ENCODE measurements at regions of chr13 and their contacts with region 1.

Region 1: DNA sequence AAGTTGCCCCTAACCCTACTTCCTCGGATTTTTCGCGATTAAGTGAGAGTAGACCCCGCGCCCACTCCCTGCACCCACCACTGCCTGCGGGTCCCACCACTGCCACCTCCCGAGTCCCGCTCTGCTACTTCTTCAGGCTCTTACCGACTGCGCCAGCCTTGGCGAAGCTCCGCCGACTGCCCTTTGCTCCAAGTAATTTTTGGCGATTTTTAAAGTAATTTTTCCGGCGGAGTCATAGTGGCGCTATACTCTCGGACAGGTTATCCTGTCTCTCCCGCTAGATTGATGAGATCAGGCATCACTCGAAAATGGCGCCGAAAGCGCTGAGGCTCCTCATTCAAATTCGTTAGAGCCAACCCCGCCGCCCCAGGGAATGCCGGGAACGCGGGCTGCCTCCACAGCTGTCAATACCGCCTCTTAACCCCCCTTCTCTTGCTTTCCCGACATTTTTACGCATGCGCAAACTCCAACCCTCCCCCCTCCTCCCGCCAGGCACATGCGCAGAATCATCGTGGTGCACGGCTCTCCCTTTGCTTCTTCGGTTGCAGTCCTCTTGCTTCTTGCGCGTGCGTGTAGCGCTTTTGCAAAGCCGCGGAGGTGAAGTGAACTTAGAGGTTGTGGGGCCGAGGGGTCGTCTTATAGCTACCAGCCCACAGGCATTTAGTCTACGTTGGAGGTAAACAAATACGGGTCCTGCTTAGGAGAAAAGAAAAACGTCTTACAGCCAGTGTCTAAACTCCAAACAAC is 66.6 kb downstream of the KCNRG start:
- DNase-seq: peak; percentile 75 to 97
- ATAC-seq: peak; percentile 83 to 89
- H3K4me3 ChIP-seq: peak overlapping the region; percentile 80
- H3K27ac ChIP-seq: peak overlapping the region; percentile 91 to 98
- H3K4me1 ChIP-seq: peaks cover 19% of the 10 kb centered on the region; the same call in 2 of the 3 replicates
- CTCF ChIP-seq: no peak; the same call in 2 of the 3 replicates
- EP300 ChIP-seq: no peak
- POLR2A ChIP-seq: peak; percentile 26
- RAD21 ChIP-seq: no peak

Region 2: DNA sequence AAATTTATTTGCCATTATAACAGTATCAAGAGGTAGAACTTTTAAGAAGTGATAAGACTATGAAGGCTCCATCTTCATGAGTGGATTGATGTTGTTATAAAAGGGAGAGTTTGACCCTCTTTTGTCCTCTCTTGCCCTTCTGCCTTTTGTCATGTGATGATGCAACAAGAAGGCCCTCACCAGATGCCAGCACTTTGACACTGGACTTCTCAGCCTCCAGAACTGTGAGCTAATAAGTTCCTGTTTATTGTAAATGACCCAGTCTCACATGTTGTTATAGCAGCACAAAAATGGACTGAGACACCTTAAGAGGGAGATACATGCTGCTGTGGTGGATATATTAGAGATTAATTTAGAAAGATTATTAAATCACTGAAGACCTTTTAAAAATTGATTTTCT is 217.3 kb before region 1 on chr13:
- CTCF ChIA-PET with region 1: no interaction called
- POLR2A ChIA-PET with region 1: no interaction called
- DNase-seq: no peak
- ATAC-seq: no peak
- H3K4me3 ChIP-seq: no peak overlapping the region
- H3K27ac ChIP-seq: peak overlapping the region; percentile 44 to 52; a peak in 2 of 6 replicates
- H3K4me1 ChIP-seq: peaks cover 14% of the 10 kb centered on the region
- CTCF ChIP-seq: no peak
- EP300 ChIP-seq: no peak
- POLR2A ChIP-seq: no peak
- RAD21 ChIP-seq: no peak

Region 3: GRCh38 chr13:49996951-49997895 is 84.6 kb before region 1 on chr13 and contains the start of gene TRIM13:
- CTCF ChIA-PET with region 1: interaction called, 22 read pairs
- POLR2A ChIA-PET with region 1: interaction called, 36 read pairs
- DNase-seq: peak; percentile 49 to 87
- ATAC-seq: peak; percentile 91 to 92
- H3K4me3 ChIP-seq: peak within 1 kb of the TSS; percentile 76
- H3K27ac ChIP-seq: peak within 1 kb of the TSS; percentile 99 to 100
- H3K4me1 ChIP-seq: peaks cover 24% of the 10 kb centered on the region
- CTCF ChIP-seq: peak; percentile 65
- EP300 ChIP-seq: no peak; a peak in 1 of 5 replicates
- POLR2A ChIP-seq: no peak; the same call in 1 of the 2 replicates
- RAD21 ChIP-seq: peak; percentile 41 to 49; a peak in 2 of 5 replicates
- polyA plus RNA-seq, gene TRIM13: 22.4 and 23.0 TPM in 2 replicates

Region 4: GRCh38 chr13:50071379-50071778 is 10.5 kb before region 1 on chr13:
- CTCF ChIA-PET with region 1: interaction called, 4 read pairs
- POLR2A ChIA-PET with region 1: interaction called, 10 read pairs
- DNase-seq: no peak
- ATAC-seq: no peak
- H3K4me3 ChIP-seq: no peak overlapping the region
- H3K27ac ChIP-seq: peak overlapping the region; percentile 25 to 31; a peak in 3 of 6 replicates
- H3K4me1 ChIP-seq: peaks cover 79% of the 10 kb centered on the region
- CTCF ChIP-seq: no peak
- EP300 ChIP-seq: no peak
- POLR2A ChIP-seq: no peak
- RAD21 ChIP-seq: no peak

Region 5: GRCh38 chr13:50116430-50116973 is 34.6 kb after region 1 on chr13:
- CTCF ChIA-PET with region 1: interaction called, 11 read pairs
- POLR2A ChIA-PET with region 1: no interaction called
- DNase-seq: no peak
- ATAC-seq: no peak
- H3K4me3 ChIP-seq: no peak overlapping the region
- H3K27ac ChIP-seq: no peak overlapping the region
- H3K4me1 ChIP-seq: peaks cover 4% of the 10 kb centered on the region; the same call in 1 of the 3 replicates
- CTCF ChIP-seq: no peak
- EP300 ChIP-seq: no peak
- POLR2A ChIP-seq: no peak
- RAD21 ChIP-seq: no peak

Region 6: DNA sequence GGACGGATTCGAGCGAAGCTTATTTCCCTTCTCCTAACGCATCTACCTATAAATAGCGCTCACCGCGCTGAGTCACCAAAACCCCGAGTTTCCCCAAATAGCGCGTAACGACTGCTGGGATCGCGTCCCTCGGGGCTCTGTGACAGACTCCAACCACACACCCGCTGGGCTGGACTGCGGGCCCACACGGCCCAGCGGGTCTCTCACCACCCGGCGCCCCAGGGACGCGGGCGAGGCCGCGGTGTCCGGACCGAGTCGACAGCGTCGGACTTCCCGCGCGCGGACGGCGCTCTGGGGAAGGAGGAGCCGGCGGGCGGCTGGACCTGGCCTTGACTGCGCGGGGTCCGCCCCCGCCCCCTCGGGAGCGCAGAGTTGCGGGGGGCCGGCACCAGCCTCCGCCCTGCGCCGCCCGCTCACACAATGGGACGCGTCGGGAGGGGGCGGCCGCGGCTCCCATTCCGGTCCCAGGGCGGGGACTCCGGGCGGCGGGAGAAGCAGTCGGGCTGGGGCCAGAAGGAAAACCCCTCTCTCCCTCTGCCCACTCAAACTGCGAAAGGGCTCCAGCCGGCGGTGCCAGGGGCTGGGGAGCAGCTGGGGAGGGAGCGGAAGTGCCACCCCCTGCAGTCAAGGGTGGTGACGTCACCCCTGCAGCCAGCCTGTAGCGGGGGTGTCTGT is 42.1 kb after region 1 on chr13:
- CTCF ChIA-PET with region 1: interaction called, 4 read pairs
- POLR2A ChIA-PET with region 1: interaction called, 21 read pairs
- DNase-seq: peak; percentile 21 to 93
- ATAC-seq: peak; percentile 78 to 84
- H3K4me3 ChIP-seq: peak overlapping the region; percentile 67
- H3K27ac ChIP-seq: peak overlapping the region; percentile 97 to 99
- H3K4me1 ChIP-seq: peaks cover 14% of the 10 kb centered on the region; the same call in 2 of the 3 replicates
- CTCF ChIP-seq: no peak
- EP300 ChIP-seq: no peak
- POLR2A ChIP-seq: peak; percentile 40
- RAD21 ChIP-seq: no peak; a peak in 1 of 5 replicates

Region 7: GRCh38 chr13:50801087-50801931 is 719.5 kb after region 1 on chr13:
- CTCF ChIA-PET with region 1: interaction called, 19 read pairs
- POLR2A ChIA-PET with region 1: no interaction called
- DNase-seq: peak; percentile 14 to 57
- ATAC-seq: peak; percentile 86 to 94
- H3K4me3 ChIP-seq: no peak overlapping the region
- H3K27ac ChIP-seq: no peak overlapping the region
- H3K4me1 ChIP-seq: no peaks in the 10 kb centered on the region
- CTCF ChIP-seq: peak; percentile 62
- EP300 ChIP-seq: no peak
- POLR2A ChIP-seq: no peak
- RAD21 ChIP-seq: peak; percentile 77 to 84

Region 8: GRCh38 chr13:50911937-50912795 is 830.3 kb after region 1 on chr13:
- CTCF ChIA-PET with region 1: interaction called, 12 read pairs
- POLR2A ChIA-PET with region 1: interaction called, 3 read pairs
- DNase-seq: peak; percentile 58 to 79
- ATAC-seq: peak; percentile 14 to 49; a peak in 3 of 6 replicates
- H3K4me3 ChIP-seq: no peak overlapping the region
- H3K27ac ChIP-seq: no peak overlapping the region
- H3K4me1 ChIP-seq: peaks cover 18% of the 10 kb centered on the region
- CTCF ChIP-seq: peak; percentile 67
- EP300 ChIP-seq: no peak
- POLR2A ChIP-seq: no peak
- RAD21 ChIP-seq: peak; percentile 69 to 76

Measured in A549 (cell line).